ENCODE measurements at regions of chr1 and their contacts with region 1.

Region 1: GRCh38 chr1:84122780-84123382 is 21.2 kb upstream of the PRKACB start:
- DNase-seq: peak in 1 of 2 donors; percentile 17
- ATAC-seq: peak; percentile 57 to 80 (median 72)
- H3K4me3 ChIP-seq: no peak overlapping the region
- H3K27ac ChIP-seq: no peak overlapping the region
- H3K4me1 ChIP-seq: peaks cover 8% of the 10 kb centered on the region
- H3K27me3 ChIP-seq: no peaks in the 10 kb centered on the region
- CTCF ChIP-seq: peak; percentile 71

Region 2: DNA sequence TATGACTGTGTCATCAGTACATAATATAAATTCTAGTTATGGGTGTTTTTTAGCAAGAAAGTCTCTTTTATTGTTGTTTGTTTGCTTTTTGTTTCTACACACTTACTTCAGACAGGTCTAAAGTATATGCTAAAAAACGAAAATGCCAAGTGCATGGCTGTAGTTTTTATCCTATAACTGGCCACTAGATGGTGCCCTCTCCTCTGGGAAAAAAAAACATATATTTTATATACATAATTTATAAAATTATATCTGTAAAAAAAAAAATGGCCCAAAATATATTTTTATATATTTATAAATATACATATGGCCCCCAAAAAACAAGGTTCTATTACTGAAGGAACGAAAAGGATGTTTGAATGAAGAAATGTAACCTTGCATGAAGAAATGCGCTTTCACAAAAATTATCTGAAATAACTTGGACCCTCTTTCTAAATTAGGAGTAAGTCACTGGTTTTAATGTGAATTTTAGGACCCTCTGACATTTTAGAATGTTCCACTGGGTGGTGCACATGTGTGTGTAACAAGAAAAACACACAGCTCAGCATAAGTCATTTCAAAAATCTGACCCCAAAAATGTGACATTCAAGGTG is 217.5 kb before region 1 on chr1:
- intact Hi-C with region 1: no loop called
- DNase-seq: no peak
- ATAC-seq: no peak
- H3K4me3 ChIP-seq: no peak overlapping the region
- H3K27ac ChIP-seq: no peak overlapping the region
- H3K4me1 ChIP-seq: no peaks in the 10 kb centered on the region
- H3K27me3 ChIP-seq: no peaks in the 10 kb centered on the region
- CTCF ChIP-seq: peak; percentile 65

Region 3: GRCh38 chr1:83931658-83932253 is 191.1 kb before region 1 on chr1:
- intact Hi-C with region 1: loop called (anchors 2 to 5 kb)
- DNase-seq: no peak
- ATAC-seq: peak; percentile 64 to 89 (median 72)
- H3K4me3 ChIP-seq: no peak overlapping the region
- H3K27ac ChIP-seq: no peak overlapping the region
- H3K4me1 ChIP-seq: peaks cover 10% of the 10 kb centered on the region
- H3K27me3 ChIP-seq: no peaks in the 10 kb centered on the region
- CTCF ChIP-seq: peak; percentile 76

Region 4: DNA sequence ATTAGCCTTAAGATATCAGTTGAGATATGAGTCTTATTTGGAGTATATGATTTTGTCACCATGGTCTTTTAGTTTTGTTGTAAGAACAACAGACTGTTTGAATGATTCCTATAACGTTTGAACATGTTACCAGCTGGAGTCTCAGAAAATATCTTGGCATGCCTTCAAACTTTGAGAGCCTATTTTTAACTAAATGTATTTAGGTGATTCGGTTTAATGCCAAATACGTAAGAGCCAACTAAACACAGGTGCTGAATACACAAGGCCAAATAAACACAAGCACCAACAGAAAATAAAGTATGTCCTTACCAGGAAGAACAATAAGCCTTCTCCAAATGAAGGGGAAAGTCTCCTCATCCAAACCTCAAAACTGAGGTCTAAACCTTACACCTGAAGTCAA is 69.8 kb after region 1 on chr1:
- intact Hi-C with region 1: no loop called
- DNase-seq: no peak
- ATAC-seq: no peak
- H3K4me3 ChIP-seq: no peak overlapping the region
- H3K27ac ChIP-seq: no peak overlapping the region
- H3K4me1 ChIP-seq: no peaks in the 10 kb centered on the region
- H3K27me3 ChIP-seq: no peaks in the 10 kb centered on the region
- CTCF ChIP-seq: no peak

Region 5: DNA sequence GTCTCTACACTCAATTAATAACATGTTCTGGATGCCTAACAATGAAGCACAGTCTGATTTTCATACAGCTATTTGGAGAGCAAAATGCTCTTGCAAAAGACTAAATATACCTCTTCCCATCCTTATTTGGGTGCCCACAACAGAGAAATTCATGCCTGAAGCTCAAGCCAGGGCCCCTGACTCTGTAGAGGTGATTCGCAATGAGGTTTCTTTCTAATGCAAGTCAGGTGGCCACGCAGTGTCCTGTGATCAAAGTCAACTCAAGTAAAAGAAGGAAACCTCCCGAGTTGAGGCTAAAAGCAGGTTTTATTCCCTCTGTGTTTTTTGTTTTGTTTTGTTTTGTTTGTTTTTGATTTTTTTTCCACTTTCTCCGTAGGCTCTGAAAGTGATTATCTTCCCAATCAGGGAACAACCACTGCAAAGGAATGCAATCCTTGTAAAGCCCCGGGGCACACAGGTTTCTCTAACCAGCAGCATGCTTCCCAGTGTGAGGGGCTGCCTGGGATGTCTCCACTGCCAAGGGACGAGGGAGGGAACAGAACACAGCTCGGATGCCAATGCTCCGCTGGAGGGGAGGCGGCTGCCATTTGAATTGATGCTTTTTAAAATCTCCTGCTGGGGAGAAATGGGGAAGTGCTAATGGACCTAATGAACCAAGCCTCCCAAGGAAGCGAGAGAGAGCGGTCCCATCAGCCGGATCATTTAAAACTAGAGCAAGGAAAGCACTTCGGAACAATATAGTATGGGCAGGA is 641.2 kb after region 1 on chr1:
- intact Hi-C with region 1: loop called in 1 of 2 experiments (anchors 10 kb)
- DNase-seq: no peak
- ATAC-seq: no peak
- H3K4me3 ChIP-seq: no peak overlapping the region
- H3K27ac ChIP-seq: no peak overlapping the region
- H3K4me1 ChIP-seq: no peaks in the 10 kb centered on the region
- H3K27me3 ChIP-seq: peaks cover 0 to 14% (median 1%) of the 10 kb centered on the region in 3 donors
- CTCF ChIP-seq: no peak

Measured in psoas muscle (tissue), 8 donors.